ENCODE measurements at regions of chr21 and their contacts with region 1.

Region 1: DNA sequence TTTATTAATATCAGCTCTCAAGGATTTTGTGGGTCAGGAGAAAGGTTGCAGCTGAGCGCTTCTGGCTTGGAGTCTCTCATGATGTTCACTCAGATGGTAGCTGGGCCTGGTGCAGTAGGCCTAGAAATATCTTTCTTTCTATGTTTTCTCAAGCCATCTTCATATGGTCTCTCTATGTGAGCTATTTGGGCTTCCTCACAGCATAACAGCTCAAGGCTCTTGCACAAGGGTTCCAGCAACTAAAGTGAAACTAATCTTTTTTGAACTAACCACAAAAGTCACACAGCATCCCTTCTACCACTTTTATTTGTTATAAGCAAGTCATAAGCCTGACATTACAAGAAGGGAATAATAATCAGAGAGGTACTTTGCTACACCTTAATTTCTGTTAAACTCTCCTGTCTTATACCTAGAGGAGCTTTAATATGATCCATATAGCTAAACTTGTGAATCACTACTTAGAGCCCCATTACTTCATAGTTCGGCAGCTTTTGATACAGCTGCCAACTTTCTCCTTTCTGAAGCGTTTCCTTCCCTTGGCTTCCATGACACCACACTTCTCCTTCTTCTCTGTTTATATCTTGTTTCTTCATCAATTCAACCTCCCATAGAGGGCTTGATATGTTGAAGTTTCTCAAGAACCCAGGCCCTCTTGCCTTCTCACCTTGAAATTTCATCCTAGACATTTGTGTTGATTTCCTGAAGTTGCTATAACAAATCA is 720.2 kb downstream of the LTN1 start:
- DNase-seq: no peak
- H3K4me3 ChIP-seq: no peak overlapping the region
- H3K27ac ChIP-seq: no peak overlapping the region
- H3K4me1 ChIP-seq: no peaks in the 10 kb centered on the region
- H3K27me3 ChIP-seq: no peaks in the 10 kb centered on the region
- CTCF ChIP-seq: no peak
- EP300 ChIP-seq: no peak
- POLR2A ChIP-seq: no peak

Region 2: GRCh38 chr21:28124541-28124940 is 147.9 kb before region 1 on chr21:
- intact Hi-C with region 1: loop called in 1 of 4 experiments (anchors 5 kb)
- DNase-seq: no peak
- H3K4me3 ChIP-seq: no peak overlapping the region
- H3K27ac ChIP-seq: no peak overlapping the region
- H3K4me1 ChIP-seq: no peaks in the 10 kb centered on the region
- H3K27me3 ChIP-seq: no peaks in the 10 kb centered on the region
- CTCF ChIP-seq: no peak
- EP300 ChIP-seq: no peak
- POLR2A ChIP-seq: no peak

Region 3: DNA sequence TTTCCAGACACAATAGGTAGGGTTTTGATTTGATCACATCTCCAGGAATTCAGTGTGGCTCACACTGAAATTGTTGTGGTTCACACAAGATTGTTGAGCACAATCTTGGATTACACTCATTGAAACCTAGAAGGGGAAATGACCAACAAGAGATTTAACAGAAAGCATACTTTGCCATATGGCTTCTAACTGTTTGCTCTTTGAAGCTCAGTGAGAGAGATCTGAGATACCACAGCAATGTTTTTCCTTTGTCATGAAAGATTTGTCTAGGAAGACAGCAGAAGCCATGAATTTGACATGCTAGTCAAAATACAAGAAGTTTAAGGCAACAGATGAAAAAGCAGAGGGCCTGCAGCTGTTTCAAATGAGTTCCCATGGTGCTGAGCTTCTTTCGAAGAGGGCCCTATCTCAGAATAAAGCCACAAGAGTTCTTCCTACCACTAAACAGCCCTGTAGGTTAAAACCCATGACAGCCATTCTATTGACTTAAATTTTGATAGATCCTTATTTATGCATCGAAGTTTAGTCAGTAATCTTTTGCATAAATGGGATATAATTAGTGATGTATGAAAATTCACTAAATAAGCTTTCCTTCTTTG is 69.9 kb after region 1 on chr21:
- intact Hi-C with region 1: no loop called
- DNase-seq: no peak
- H3K4me3 ChIP-seq: no peak overlapping the region
- H3K27ac ChIP-seq: no peak overlapping the region
- H3K4me1 ChIP-seq: no peaks in the 10 kb centered on the region
- H3K27me3 ChIP-seq: no peaks in the 10 kb centered on the region
- CTCF ChIP-seq: no peak
- EP300 ChIP-seq: no peak
- POLR2A ChIP-seq: no peak

Measured in ovary (tissue), 10 donors.